K562 (cell line): ENCODE measurements at regions of chr22 and their contacts with region 1.

Region 1: DNA sequence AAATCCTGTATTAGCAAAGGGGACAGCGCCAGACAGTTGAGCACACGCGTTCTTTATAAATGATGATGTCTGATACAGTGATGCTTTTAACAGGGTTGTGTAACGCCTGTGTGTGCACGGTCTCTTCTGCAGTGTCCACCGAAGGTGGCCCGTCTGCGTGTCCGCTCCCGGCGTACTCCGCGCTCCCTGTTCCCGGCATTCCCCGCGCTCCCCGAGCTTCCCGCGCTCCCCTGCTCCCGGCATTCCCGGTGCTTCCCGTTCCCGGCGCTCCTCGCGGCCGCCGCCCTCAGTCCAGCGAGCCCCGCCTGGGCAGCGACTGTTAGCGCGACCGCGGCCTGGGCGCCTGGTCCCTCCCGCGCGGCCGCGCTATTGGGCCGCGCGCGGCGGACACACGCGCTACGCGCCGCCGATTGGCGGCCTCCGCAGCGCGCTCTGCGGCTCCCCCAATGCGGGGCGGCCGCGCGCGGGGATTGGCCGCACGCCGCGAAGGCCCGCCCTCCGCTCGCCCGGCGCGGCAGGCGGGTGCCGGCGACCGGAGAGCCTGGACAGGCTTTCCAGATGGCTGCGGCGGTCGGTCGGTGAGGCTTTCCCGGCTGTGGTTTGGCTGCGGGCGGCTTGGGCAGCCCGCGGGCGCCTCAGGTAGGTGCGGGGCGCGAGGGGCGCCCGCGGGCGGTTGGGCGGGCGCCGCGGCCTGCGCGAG is at the start of gene DGCR8:
- DNase-seq: peak; percentile 100
- ATAC-seq: peak; percentile 87
- H3K4me3 ChIP-seq: peak within 1 kb of the TSS; percentile 67
- H3K27ac ChIP-seq: peak within 1 kb of the TSS; percentile 78
- H3K4me1 ChIP-seq: peaks cover 46 to 67% of the 10 kb centered on the region in 2 experiments
- H3K27me3 ChIP-seq: no peaks in the 10 kb centered on the region
- CTCF ChIP-seq: peak in 2 of 3 experiments; percentile 8 to 9; a peak in 2 of 6 replicates
- EP300 ChIP-seq: peak; percentile 62
- POLR2A ChIP-seq: no peak
- RAD21 ChIP-seq: peak; percentile 30 to 34; a peak in 2 of 4 replicates
- polyA plus RNA-seq, gene DGCR8: 5.9 to 7.7 TPM

Region 2: DNA sequence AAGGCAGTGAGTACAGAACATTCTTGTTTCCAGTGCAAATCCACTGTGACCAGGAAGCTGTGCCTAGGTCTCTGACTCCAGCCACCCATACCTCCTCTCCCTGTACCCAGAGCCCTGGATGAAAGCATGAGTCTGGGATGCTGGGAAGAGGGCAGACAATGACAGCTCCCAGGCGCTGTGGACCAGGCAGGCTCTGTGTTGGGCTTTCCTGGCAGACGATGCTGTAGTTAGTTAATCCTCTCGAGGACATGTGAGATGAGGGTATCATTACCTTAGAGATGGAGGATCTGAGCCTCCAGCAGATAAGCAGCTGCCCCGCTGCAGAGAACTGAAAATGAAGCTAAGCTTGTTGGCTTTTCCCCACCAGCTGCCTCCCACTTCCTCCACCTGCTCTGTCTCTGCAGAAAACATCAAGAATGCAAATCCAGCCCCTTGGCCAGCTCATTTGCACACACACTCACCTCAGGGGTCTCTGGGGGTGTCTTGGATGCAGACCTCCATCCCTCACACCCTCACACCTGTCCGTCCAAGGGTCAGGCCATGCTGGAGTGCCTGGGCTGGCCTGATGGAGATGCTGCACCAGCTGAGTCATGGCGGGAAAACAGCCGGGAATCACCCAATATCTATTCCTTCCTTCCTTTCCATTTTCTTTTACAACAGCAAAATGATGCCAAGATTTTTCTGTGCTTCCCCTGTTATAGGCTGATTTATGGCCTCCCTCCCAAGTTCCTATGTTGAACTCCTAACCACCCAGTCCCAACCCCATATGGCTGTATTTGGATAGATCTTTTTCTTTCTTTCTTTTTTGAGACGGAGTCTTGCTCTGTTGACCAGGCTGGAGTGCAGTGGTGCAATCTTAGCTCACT is 460.5 kb before region 1 on chr22:
- CTCF ChIA-PET with region 1: no interaction called
- POLR2A ChIA-PET with region 1: no interaction called
- in situ Hi-C with region 1: no loop called
- intact Hi-C with region 1: no loop called
- DNase-seq: no peak
- ATAC-seq: no peak
- H3K4me3 ChIP-seq: no peak overlapping the region
- H3K27ac ChIP-seq: no peak overlapping the region
- H3K4me1 ChIP-seq: peaks cover 0 to 7% of the 10 kb centered on the region in 2 experiments; a peak in 2 of 5 replicates
- H3K27me3 ChIP-seq: peaks cover 84 to 92% of the 10 kb centered on the region in 2 experiments
- CTCF ChIP-seq: no peak
- EP300 ChIP-seq: no peak
- POLR2A ChIP-seq: no peak
- RAD21 ChIP-seq: no peak

Region 3: DNA sequence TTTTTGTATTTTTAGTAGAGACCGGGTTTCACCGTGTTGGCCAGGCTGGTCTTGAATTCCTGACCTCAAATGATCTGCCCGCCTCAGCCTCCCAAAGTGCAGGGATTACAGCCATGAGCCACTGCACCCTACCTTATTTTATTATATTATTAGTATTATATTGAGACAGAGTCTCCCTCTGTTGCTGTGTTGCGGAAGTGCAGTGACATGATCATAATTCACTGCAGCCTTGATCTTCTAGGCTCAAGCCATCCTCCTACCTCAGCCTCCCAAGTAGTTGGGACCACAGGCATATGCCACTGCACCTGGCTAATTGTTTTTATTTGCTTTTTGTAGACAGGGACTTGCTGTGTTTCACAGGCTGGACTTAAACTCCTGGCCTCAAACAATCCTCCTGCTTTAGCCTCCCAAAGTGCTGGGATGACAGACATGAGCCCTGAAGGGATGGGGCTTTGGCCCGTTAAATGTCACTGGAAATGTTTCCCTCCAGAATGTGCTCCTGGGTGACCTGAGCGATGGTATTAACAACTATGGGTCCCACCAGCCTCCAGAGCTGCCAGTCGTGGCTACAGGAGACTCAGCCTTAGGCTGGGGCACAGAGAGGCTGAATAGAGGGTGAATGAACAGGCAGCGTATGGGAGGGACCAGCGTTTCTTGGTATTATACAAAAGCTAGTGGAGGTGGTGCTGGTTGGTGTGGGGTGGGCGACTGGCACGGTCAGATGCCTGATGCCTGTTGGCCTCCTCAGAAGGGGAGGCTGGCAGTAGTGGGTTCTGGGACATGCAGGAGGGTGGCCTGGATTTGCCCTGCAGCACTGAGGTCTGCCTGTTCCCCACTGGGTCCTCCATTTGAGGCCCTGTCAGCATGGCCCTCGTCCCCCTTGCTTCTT is 51.7 kb before region 1 on chr22:
- CTCF ChIA-PET with region 1: no interaction called
- POLR2A ChIA-PET with region 1: interaction called, 4 read pairs
- in situ Hi-C with region 1: no loop called
- intact Hi-C with region 1: loop called (anchors 1 kb)
- DNase-seq: peak in 1 of 4 experiments; percentile 78
- ATAC-seq: peak; percentile 52
- H3K4me3 ChIP-seq: no peak overlapping the region
- H3K27ac ChIP-seq: no peak overlapping the region
- H3K4me1 ChIP-seq: peaks cover 36 to 75% of the 10 kb centered on the region in 2 experiments
- H3K27me3 ChIP-seq: no peaks in the 10 kb centered on the region
- CTCF ChIP-seq: peak; percentile 73 to 85 (median 81)
- EP300 ChIP-seq: 0 out of 2 replicates have a peak, but pooled peaks have one; percentile 14
- POLR2A ChIP-seq: no peak
- RAD21 ChIP-seq: peak in 1 of 2 experiments; percentile 73; a peak in 3 of 4 replicates

Region 4: GRCh38 chr22:20061481-20061861 is 18.4 kb before region 1 on chr22:
- CTCF ChIA-PET with region 1: no interaction called
- POLR2A ChIA-PET with region 1: interaction called, 16 read pairs
- in situ Hi-C with region 1: no loop called
- intact Hi-C with region 1: loop called (anchors 2 kb)
- DNase-seq: no peak
- ATAC-seq: no peak
- H3K4me3 ChIP-seq: no peak overlapping the region
- H3K27ac ChIP-seq: no peak overlapping the region
- H3K4me1 ChIP-seq: peaks cover 28 to 85% of the 10 kb centered on the region in 2 experiments
- H3K27me3 ChIP-seq: no peaks in the 10 kb centered on the region
- CTCF ChIP-seq: no peak
- EP300 ChIP-seq: no peak
- POLR2A ChIP-seq: no peak
- RAD21 ChIP-seq: no peak

Region 5: GRCh38 chr22:20066617-20067383 is 13.1 kb before region 1 on chr22:
- CTCF ChIA-PET with region 1: no interaction called
- POLR2A ChIA-PET with region 1: interaction called, 26 read pairs
- in situ Hi-C with region 1: no loop called
- intact Hi-C with region 1: no loop called
- DNase-seq: no peak
- ATAC-seq: no peak
- H3K4me3 ChIP-seq: no peak overlapping the region
- H3K27ac ChIP-seq: no peak overlapping the region
- H3K4me1 ChIP-seq: peaks cover 23 to 55% of the 10 kb centered on the region in 2 experiments
- H3K27me3 ChIP-seq: no peaks in the 10 kb centered on the region
- CTCF ChIP-seq: 0 out of 6 replicates have a peak, but pooled peaks of 1 of the 3 experiments have one; percentile 3
- EP300 ChIP-seq: no peak
- POLR2A ChIP-seq: peak; percentile 59; the same call in 1 of the 2 replicates
- RAD21 ChIP-seq: no peak

Region 6: DNA sequence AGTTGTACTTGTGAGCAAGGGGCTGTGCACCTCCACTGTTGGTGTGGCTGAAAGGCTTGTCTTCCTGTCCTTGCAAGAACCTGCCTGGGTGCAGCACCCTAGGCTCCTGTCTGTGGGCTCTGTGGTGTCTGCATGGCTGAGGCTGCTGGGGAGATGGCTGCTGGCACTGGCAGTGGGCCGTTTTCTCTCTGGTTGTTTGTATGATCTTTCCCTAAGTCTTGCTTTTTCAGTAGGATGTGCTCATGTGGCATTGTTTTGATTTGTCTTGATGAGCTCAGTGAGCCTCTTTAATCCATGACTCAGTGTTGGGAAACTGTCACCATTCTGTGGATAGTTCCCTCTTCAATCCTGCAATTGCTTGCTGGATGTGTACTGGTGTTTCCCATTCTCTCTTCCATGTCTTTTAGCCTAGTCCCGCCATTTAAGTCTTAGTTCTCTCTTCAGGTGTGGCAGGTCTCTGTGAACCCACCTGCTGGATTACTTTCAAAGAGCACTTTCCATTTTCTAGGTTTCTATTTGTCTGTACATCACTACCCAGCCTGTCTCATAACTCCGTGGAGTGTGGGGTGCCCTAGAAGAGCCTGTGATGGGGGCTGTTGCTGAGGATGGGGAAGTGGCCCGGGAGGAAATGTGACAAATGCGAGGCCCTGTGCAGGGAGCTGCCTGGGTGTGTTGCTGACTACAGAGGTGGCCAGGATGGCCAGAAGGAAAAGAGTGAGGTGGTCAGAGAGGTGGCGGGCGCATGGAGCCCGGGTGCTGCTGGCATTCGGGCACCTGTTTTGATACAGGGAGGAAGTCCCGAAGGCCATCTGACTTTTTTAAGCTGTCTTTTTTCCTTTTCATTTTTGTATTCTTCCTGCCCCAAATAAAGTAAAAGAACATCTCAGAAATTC is 10.7 kb after region 1 on chr22:
- CTCF ChIA-PET with region 1: no interaction called
- POLR2A ChIA-PET with region 1: interaction called, 145 read pairs
- in situ Hi-C with region 1: no loop called
- intact Hi-C with region 1: no loop called
- DNase-seq: no peak
- ATAC-seq: no peak
- H3K4me3 ChIP-seq: no peak overlapping the region
- H3K27ac ChIP-seq: no peak overlapping the region
- H3K4me1 ChIP-seq: peaks cover under 1 to 14% of the 10 kb centered on the region in 2 experiments
- H3K27me3 ChIP-seq: no peaks in the 10 kb centered on the region
- CTCF ChIP-seq: no peak
- EP300 ChIP-seq: no peak
- POLR2A ChIP-seq: no peak; the same call in 1 of the 2 replicates
- RAD21 ChIP-seq: no peak

Region 7: GRCh38 chr22:20111045-20111688 is 31.3 kb after region 1 on chr22:
- CTCF ChIA-PET with region 1: no interaction called
- POLR2A ChIA-PET with region 1: interaction called, 513 read pairs
- in situ Hi-C with region 1: no loop called
- intact Hi-C with region 1: no loop called
- DNase-seq: peak; percentile 82 to 89 (median 86)
- ATAC-seq: peak; percentile 70
- H3K4me3 ChIP-seq: no peak overlapping the region
- H3K27ac ChIP-seq: peak overlapping the region; percentile 18; the same call in 1 of the 3 replicates
- H3K4me1 ChIP-seq: peaks cover 9 to 81% of the 10 kb centered on the region in 2 experiments; a peak in 4 of 5 replicates
- H3K27me3 ChIP-seq: no peaks in the 10 kb centered on the region
- CTCF ChIP-seq: peak; percentile 93 to 99 (median 94)
- EP300 ChIP-seq: no peak
- POLR2A ChIP-seq: peak; percentile 87
- RAD21 ChIP-seq: peak in 1 of 2 experiments; percentile 31; a peak in 1 of 4 replicates

Region 8: DNA sequence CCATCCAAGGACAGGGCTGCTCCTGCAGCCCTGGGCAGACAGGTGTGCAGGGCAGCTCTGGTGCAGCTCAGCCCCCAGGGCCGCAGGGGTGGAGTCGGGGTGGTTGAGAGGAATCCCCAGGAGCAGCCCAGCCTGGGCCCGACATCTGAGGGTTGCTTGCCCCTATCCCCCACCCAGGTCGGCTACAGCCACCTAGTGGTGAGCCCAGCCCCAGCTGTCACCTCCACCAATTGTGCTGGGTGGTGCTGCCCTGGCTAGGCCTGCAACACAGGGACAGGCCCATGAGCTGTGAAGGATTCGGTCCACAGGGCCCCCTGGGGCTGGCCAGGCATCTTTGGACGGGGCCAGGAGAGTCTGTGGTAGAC is 158.6 kb after region 1 on chr22:
- CTCF ChIA-PET with region 1: no interaction called
- POLR2A ChIA-PET with region 1: no interaction called
- in situ Hi-C with region 1: no loop called
- intact Hi-C with region 1: no loop called
- DNase-seq: peak; percentile 89 to 99 (median 98)
- ATAC-seq: peak; percentile 91
- H3K4me3 ChIP-seq: no peak overlapping the region
- H3K27ac ChIP-seq: no peak overlapping the region
- H3K4me1 ChIP-seq: peaks cover 7 to 86% of the 10 kb centered on the region in 2 experiments; a peak in 3 of 5 replicates
- H3K27me3 ChIP-seq: peaks cover 43 to 98% of the 10 kb centered on the region in 2 experiments
- CTCF ChIP-seq: peak; percentile 98 to 99 (median 99)
- EP300 ChIP-seq: no peak
- POLR2A ChIP-seq: no peak
- RAD21 ChIP-seq: peak in 1 of 2 experiments; percentile 97; a peak in 2 of 4 replicates